Activated naive CD4-positive, alpha-beta T cell treated with anti-CD3 and anti-CD28 coated beads, Interleukin-2, amount 10 ng/mL, durations not matched to agents 7 days and 5 days (primary cell): ENCODE measurements at regions of chrX and their contacts with region 1.

Region 1: GRCh38 chrX:41180194-41180908 is 95.1 kb downstream of the USP9X start:
- DNase-seq: peak; percentile 61
- H3K4me3 Mint-ChIP-seq: no peak overlapping the region
- H3K27ac Mint-ChIP-seq: peak overlapping the region; percentile 83
- H3K4me1 Mint-ChIP-seq: peaks cover 35% of the 10 kb centered on the region
- H3K27me3 Mint-ChIP-seq: no peaks in the 10 kb centered on the region

Region 2: GRCh38 chrX:41164449-41164848 is 15.9 kb before region 1 on chrX:
- CTCF ChIA-PET with region 1: interaction called, 14 read pairs
- DNase-seq: no peak
- H3K4me3 Mint-ChIP-seq: no peak overlapping the region
- H3K27ac Mint-ChIP-seq: no peak overlapping the region
- H3K4me1 Mint-ChIP-seq: no peaks in the 10 kb centered on the region
- H3K27me3 Mint-ChIP-seq: no peaks in the 10 kb centered on the region

Region 3: GRCh38 chrX:41198406-41198805 is 18.1 kb after region 1 on chrX:
- CTCF ChIA-PET with region 1: no interaction called
- DNase-seq: no peak
- H3K4me3 Mint-ChIP-seq: no peak overlapping the region
- H3K27ac Mint-ChIP-seq: no peak overlapping the region
- H3K4me1 Mint-ChIP-seq: peaks cover 2% of the 10 kb centered on the region
- H3K27me3 Mint-ChIP-seq: no peaks in the 10 kb centered on the region

Region 4: GRCh38 chrX:41259516-41259915 is 79.2 kb after region 1 on chrX:
- CTCF ChIA-PET with region 1: interaction called, 22 read pairs
- DNase-seq: no peak
- H3K4me3 Mint-ChIP-seq: no peak overlapping the region
- H3K27ac Mint-ChIP-seq: no peak overlapping the region
- H3K4me1 Mint-ChIP-seq: no peaks in the 10 kb centered on the region
- H3K27me3 Mint-ChIP-seq: peaks cover 5% of the 10 kb centered on the region